ENCODE measurements at regions of chr10 and their contacts with region 1.

Region 1: DNA sequence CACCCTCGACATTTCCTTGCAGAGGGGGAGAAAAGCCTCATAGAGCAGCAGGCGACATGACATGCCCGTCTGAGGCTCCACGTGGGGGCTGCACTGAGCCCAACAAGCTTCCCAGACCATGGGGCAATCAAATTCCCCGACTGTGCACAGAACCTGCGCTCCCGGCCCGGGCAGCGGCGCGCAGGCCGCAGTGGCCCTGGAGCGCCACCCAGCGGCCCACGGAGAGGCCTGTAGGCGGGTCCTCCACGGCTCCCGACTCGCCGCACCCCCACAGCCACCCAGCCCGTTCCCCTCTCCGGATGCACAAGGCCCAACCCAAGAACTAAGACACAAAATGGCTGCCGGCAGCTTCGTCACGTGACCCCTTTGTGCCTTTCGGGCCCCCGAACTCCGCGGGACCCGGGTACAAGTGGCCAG is 816 bp downstream of the EPC1 start:
- DNase-seq: peak; percentile 91
- ATAC-seq: peak; percentile 95
- H3K4me3 ChIP-seq: peak overlapping the region; percentile 89 to 96 (median 95)
- H3K27ac ChIP-seq: peak overlapping the region; percentile 100
- H3K4me1 ChIP-seq: peaks cover 76% of the 10 kb centered on the region
- H3K27me3 ChIP-seq: no peaks in the 10 kb centered on the region
- CTCF ChIP-seq: peak; percentile 95
- EP300 ChIP-seq: no peak; a peak in 1 of 4 replicates
- POLR2A ChIP-seq: no peak; a peak in 1 of 4 replicates
- RAD21 ChIP-seq: peak; percentile 93

Region 2: GRCh38 chr10:32256613-32257437 is 89.3 kb before region 1 on chr10:
- CTCF ChIA-PET with region 1: interaction called, 5 read pairs
- POLR2A ChIA-PET with region 1: no interaction called
- in situ Hi-C with region 1: no loop called
- intact Hi-C with region 1: loop called (anchors 2 kb)
- DNase-seq: peak; percentile 40
- ATAC-seq: peak; percentile 75
- H3K4me3 ChIP-seq: 0 out of 6 replicates have a peak overlapping the region, but pooled peaks of 1 of the 3 experiments have one; percentile 4
- H3K27ac ChIP-seq: no peak overlapping the region
- H3K4me1 ChIP-seq: peaks cover 11% of the 10 kb centered on the region; the same call in 1 of the 2 replicates
- H3K27me3 ChIP-seq: no peaks in the 10 kb centered on the region
- CTCF ChIP-seq: peak; percentile 88
- EP300 ChIP-seq: no peak
- POLR2A ChIP-seq: no peak
- RAD21 ChIP-seq: no peak

Region 3: DNA sequence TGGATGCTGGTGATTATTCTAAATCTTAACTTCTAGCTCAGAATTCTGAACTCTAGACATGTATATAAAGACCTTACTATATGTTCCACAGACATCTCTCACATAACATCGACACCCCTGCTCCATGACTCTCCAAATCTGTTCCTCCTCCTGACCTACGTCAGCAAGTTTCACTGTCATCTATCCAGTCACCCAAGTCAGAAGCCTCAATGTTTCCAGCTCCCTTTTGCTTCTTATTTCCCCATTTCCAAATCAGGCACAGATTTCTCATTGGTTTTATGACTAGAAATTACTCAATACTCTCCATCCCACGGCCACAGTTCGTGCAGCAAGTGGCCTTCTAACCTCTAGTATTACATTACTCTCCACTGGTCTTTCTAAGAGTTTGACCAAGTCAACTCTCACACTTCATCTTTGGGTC is 27.7 kb before region 1 on chr10:
- CTCF ChIA-PET with region 1: no interaction called
- POLR2A ChIA-PET with region 1: no interaction called
- in situ Hi-C with region 1: no loop called
- intact Hi-C with region 1: no loop called
- DNase-seq: no peak
- ATAC-seq: no peak
- H3K4me3 ChIP-seq: no peak overlapping the region
- H3K27ac ChIP-seq: no peak overlapping the region
- H3K4me1 ChIP-seq: no peaks in the 10 kb centered on the region
- H3K27me3 ChIP-seq: no peaks in the 10 kb centered on the region
- CTCF ChIP-seq: no peak
- EP300 ChIP-seq: no peak
- POLR2A ChIP-seq: no peak
- RAD21 ChIP-seq: no peak

Region 4: GRCh38 chr10:32360243-32360642 is 14.1 kb after region 1 on chr10:
- CTCF ChIA-PET with region 1: no interaction called
- POLR2A ChIA-PET with region 1: interaction called, 10 read pairs
- in situ Hi-C with region 1: no loop called
- intact Hi-C with region 1: no loop called
- DNase-seq: peak; percentile 66
- ATAC-seq: peak; percentile 96
- H3K4me3 ChIP-seq: no peak overlapping the region
- H3K27ac ChIP-seq: peak overlapping the region; percentile 35
- H3K4me1 ChIP-seq: peaks cover 45% of the 10 kb centered on the region
- H3K27me3 ChIP-seq: no peaks in the 10 kb centered on the region
- CTCF ChIP-seq: no peak
- EP300 ChIP-seq: no peak
- POLR2A ChIP-seq: no peak
- RAD21 ChIP-seq: no peak

Region 5: GRCh38 chr10:32367793-32368453 is 21.8 kb after region 1 on chr10:
- CTCF ChIA-PET with region 1: interaction called, 18 read pairs
- POLR2A ChIA-PET with region 1: no interaction called
- in situ Hi-C with region 1: no loop called
- intact Hi-C with region 1: no loop called
- DNase-seq: peak; percentile 54
- ATAC-seq: peak; percentile 62
- H3K4me3 ChIP-seq: no peak overlapping the region
- H3K27ac ChIP-seq: no peak overlapping the region
- H3K4me1 ChIP-seq: peaks cover 13% of the 10 kb centered on the region
- H3K27me3 ChIP-seq: no peaks in the 10 kb centered on the region
- CTCF ChIP-seq: peak; percentile 79
- EP300 ChIP-seq: no peak
- POLR2A ChIP-seq: no peak
- RAD21 ChIP-seq: peak; percentile 53; the same call in 1 of the 2 replicates

Region 6: GRCh38 chr10:32378363-32379317 is 32.5 kb after region 1 on chr10:
- CTCF ChIA-PET with region 1: no interaction called
- POLR2A ChIA-PET with region 1: interaction called, 6 read pairs
- in situ Hi-C with region 1: no loop called
- intact Hi-C with region 1: loop called (anchors 1 kb)
- DNase-seq: peak; percentile 84
- ATAC-seq: peak; percentile 98
- H3K4me3 ChIP-seq: peak overlapping the region; percentile 64 to 94 (median 76)
- H3K27ac ChIP-seq: peak overlapping the region; percentile 79
- H3K4me1 ChIP-seq: peaks cover 38% of the 10 kb centered on the region
- H3K27me3 ChIP-seq: no peaks in the 10 kb centered on the region; a peak in 1 of 5 replicates
- CTCF ChIP-seq: 0 out of 2 replicates have a peak, but pooled peaks have one; percentile 8
- EP300 ChIP-seq: no peak
- POLR2A ChIP-seq: peak in 1 of 2 experiments; percentile 35; a peak in 2 of 4 replicates
- RAD21 ChIP-seq: no peak

Region 7: GRCh38 chr10:32393911-32394310 is 47.8 kb after region 1 on chr10:
- CTCF ChIA-PET with region 1: no interaction called
- POLR2A ChIA-PET with region 1: no interaction called
- in situ Hi-C with region 1: no loop called
- intact Hi-C with region 1: no loop called
- DNase-seq: no peak
- ATAC-seq: no peak
- H3K4me3 ChIP-seq: no peak overlapping the region
- H3K27ac ChIP-seq: no peak overlapping the region
- H3K4me1 ChIP-seq: no peaks in the 10 kb centered on the region
- H3K27me3 ChIP-seq: no peaks in the 10 kb centered on the region
- CTCF ChIP-seq: no peak
- EP300 ChIP-seq: no peak
- POLR2A ChIP-seq: no peak
- RAD21 ChIP-seq: no peak